Aorta (tissue), 5 donors: ENCODE measurements at regions of chr1 and their contacts with region 1.

Region 1: DNA sequence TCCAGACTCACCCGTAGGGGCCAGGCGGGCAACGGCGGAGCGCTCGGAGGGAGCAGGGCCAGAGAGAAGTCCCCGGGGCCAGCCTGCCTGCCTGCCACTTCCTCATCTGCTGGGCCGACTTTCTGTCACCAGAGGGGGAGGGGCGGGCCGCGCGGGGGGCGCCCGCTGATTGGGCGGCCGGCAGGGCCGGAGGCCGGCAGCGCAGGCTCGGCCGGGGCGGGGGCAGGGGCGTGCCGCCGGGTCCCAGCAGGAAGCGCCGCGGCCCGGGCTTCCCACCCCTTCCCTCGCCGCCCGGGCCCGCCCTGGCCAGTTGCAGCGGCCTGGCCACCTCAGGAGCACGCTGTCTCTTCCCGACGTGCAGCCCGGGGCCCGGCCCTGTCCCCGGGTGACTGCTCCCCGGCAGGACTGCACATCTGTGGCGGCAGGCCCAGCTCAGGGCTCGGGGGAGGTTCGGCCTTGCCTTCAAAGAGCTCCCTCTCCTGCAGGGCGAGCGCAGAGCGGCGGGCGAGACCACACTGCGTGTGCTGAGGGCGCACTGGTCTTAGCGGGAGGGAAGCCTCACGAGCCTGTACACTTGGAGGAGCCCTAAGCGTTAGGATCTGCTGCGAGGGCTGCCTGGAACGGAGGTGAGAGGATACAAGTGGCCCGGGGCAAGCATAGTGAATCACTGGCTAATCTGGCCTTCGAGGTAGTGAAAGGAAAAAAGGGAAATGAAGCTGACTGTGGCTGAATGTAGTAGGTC is at the start of gene ELOVL1:
- DNase-seq: peak; percentile 97 to 98
- ATAC-seq: peak; percentile 96
- H3K4me3 ChIP-seq: peak within 1 kb of the TSS; percentile 65 to 72
- H3K27ac ChIP-seq: peak within 1 kb of the TSS in 1 of 2 donors; percentile 84
- H3K4me1 ChIP-seq: peaks cover 0 to 4% of the 10 kb centered on the region in 2 donors
- H3K27me3 ChIP-seq: no peaks in the 10 kb centered on the region
- total RNA-seq, gene ELOVL1: 57.4 to 57.9 TPM

Region 2: GRCh38 chr1:43389326-43390313 is 21.5 kb after region 1 on chr1 and contains the starts of genes MED8 and SZT2:
- intact Hi-C with region 1: loop called in 1 of 2 experiments (anchors 1 kb)
- DNase-seq: peak; percentile 97
- ATAC-seq: peak; percentile 98
- H3K4me3 ChIP-seq: peak within 1 kb of the TSS; percentile 47 to 63
- H3K27ac ChIP-seq: peak within 1 kb of the TSS in 1 of 2 donors; percentile 23
- H3K4me1 ChIP-seq: peaks cover 0 to 11% of the 10 kb centered on the region in 2 donors
- H3K27me3 ChIP-seq: no peaks in the 10 kb centered on the region
- total RNA-seq, gene MED8: 32.6 to 34.9 TPM
- total RNA-seq, gene SZT2: 70.6 to 91.5 TPM

Region 3: DNA sequence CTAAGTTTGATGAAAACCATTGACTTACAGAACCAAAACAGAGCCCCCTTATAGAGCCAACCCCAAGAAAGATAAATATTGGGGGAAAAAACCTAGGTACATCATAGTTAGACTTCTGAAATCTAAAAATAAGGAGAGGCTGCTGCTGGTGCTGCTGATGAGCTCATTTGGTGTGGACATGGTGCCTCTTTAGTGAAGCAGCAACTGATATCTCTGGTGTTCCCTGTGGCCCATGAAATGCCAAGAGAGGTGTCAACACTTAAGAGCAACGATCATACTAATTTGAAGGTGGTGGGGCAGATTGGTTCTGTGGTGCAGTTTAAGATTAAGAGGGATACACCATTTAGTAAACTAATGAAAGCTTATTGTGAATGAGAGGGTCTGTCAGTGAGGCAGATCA is 375.1 kb after region 1 on chr1:
- intact Hi-C with region 1: no loop called
- DNase-seq: no peak
- ATAC-seq: no peak
- H3K4me3 ChIP-seq: no peak overlapping the region
- H3K27ac ChIP-seq: no peak overlapping the region
- H3K4me1 ChIP-seq: no peaks in the 10 kb centered on the region
- H3K27me3 ChIP-seq: no peaks in the 10 kb centered on the region